Activated naive CD8-positive, alpha-beta T cell treated with anti-CD3 and anti-CD28 coated beads, Interleukin-2, amount 10 ng/mL, durations not matched to agents 7 days and 5 days (primary cell): ENCODE measurements at regions of chr13 and their contacts with region 1.

Region 1: GRCh38 chr13:49495783-49496762 is at the start of gene PHF11:
- DNase-seq: peak; percentile 86
- ATAC-seq: peak; percentile 85
- H3K4me3 Mint-ChIP-seq: peak within 1 kb of the TSS; percentile 98
- H3K27ac Mint-ChIP-seq: peak within 1 kb of the TSS; percentile 100
- H3K4me1 Mint-ChIP-seq: peaks cover 51% of the 10 kb centered on the region
- H3K27me3 Mint-ChIP-seq: no peaks in the 10 kb centered on the region
- total RNA-seq, gene PHF11: 121 to 123 TPM

Region 2: GRCh38 chr13:49476529-49476928 is 19.5 kb before region 1 on chr13:
- POLR2A ChIA-PET with region 1: no interaction called
- DNase-seq: no peak
- ATAC-seq: no peak
- H3K4me3 Mint-ChIP-seq: no peak overlapping the region
- H3K27ac Mint-ChIP-seq: no peak overlapping the region
- H3K4me1 Mint-ChIP-seq: no peaks in the 10 kb centered on the region
- H3K27me3 Mint-ChIP-seq: no peaks in the 10 kb centered on the region

Region 3: GRCh38 chr13:49540552-49540951 is 44.5 kb after region 1 on chr13:
- POLR2A ChIA-PET with region 1: interaction called, 16 read pairs
- DNase-seq: no peak
- ATAC-seq: peak; percentile 63
- H3K4me3 Mint-ChIP-seq: peak overlapping the region; percentile 76
- H3K27ac Mint-ChIP-seq: peak overlapping the region; percentile 88
- H3K4me1 Mint-ChIP-seq: peaks cover 20% of the 10 kb centered on the region
- H3K27me3 Mint-ChIP-seq: no peaks in the 10 kb centered on the region

Region 4: DNA sequence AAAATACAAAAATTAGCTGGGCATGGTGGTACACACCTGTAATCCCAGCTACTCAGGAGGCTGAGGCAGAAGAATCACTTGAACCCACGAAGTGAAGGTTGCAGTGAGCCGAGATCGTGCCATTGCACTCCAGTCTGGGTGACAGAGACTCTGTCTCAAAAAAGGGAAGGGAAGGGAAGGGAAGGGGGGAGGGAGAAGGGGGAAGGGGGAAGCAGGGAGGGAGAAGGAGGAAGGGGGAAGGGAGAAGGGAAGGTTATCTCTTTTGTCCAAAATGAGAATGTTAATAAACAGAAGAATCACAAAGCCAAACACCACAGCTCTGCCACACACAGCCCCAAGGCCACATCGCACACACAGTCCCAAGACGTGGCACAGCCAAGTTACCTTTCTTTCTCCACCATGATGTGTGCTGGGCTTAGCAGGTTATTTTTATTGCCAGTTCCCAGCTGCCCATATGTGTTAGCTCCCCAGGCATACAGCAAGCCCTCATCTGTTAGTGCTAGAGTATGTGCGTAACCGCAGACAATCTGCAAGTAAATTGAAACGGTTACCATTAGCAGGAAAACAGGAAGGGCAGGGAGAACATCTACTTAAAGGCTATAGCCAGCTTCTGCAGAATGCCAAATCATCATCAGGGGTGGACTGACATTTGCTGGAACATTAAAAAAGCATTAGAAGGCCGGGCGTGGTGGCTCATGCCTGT is 55.0 kb after region 1 on chr13:
- POLR2A ChIA-PET with region 1: no interaction called
- DNase-seq: no peak
- ATAC-seq: no peak
- H3K4me3 Mint-ChIP-seq: no peak overlapping the region
- H3K27ac Mint-ChIP-seq: no peak overlapping the region
- H3K4me1 Mint-ChIP-seq: peaks cover 2% of the 10 kb centered on the region
- H3K27me3 Mint-ChIP-seq: no peaks in the 10 kb centered on the region